Posterior cingulate gyrus (tissue), 11 donors: ENCODE measurements at regions of chr3 and their contacts with region 1.

Region 1: GRCh38 chr3:184185461-184186308 is at the start of gene ABCF3:
- DNase-seq: peak; percentile 96 to 100 (median 98)

Region 2: GRCh38 chr3:183680061-183680460 is 505.6 kb before region 1 on chr3:
- intact Hi-C with region 1: no loop called
- DNase-seq: no peak

Region 3: GRCh38 chr3:183812761-183813445 is 372.8 kb before region 1 on chr3:
- intact Hi-C with region 1: no loop called
- DNase-seq: peak in 6 of 10 donors; percentile 59 to 92 (median 70)

Region 4: DNA sequence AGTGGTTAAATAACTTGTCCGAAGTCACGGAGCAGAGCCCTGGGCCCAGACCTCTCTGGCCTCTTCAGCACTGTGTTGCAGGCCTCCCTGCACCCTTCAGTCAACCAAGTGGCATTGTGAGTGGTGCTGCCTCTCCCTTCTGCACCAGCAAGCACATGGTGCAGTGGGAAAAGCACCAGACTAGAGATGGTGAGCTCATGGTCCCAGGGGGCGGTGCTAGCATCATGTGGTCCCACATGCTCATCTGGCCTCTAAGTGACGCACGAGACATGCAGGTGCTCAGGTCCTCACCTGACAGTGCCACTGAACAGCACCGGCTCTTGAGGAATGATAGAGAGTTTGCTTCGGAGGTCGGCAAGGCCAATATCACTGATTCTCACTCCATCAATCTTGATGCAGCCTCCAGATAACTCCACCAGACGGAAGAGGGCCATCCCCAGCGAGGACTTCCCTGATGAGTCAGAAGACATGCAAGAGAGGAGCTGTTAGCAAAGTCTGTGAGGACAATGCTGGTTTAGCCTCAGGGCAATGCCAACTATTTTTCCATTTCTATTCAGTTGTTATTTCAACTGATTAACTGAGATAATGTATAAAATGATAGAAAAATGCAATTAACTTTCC is 248.0 kb before region 1 on chr3:
- intact Hi-C with region 1: no loop called
- DNase-seq: peak in 1 of 10 donors; percentile 34

Region 5: GRCh38 chr3:184135149-184135910 is 50.4 kb before region 1 on chr3 and contains the start of gene EIF2B5:
- intact Hi-C with region 1: loop called (anchors 1 kb)
- DNase-seq: peak; percentile 91 to 99 (median 94)

Region 6: DNA sequence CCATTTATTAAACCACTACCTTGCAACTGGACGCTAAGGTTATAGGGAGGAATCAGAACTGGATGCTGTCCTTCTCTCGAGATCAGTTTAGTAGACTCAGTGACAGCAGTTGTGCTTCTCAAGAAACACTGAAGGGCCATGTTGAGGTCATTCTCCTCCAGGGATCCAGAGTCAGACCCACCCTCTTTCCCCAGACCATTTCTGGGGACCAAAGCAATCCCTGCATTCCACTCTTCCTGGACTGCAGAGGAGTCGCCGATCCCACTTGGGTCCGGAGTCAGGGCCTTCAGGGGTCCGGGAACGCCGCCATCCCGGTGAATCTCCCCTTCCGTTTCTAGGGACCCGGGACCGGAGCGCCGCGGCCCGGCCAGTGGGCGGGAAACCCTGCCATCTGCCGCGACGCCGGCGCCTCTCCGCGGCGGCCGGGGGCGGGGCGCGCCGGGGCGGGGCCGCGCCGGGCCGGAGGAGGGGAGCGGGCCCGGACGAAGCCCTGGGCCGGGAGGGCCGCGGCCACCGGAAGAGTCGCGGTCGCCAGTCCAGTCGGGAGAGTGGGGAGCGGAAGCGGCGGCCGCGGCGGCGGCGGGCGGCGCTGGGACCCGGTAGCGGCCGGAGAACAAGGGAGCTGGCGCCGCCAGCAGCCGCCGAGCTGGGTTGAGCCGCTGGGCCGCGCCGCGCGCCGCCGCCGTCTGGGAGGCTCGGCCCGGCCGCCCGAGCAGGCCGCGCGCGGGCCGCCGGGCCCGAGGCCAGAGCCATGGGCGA is 30.6 kb before region 1 on chr3 and contains the start of gene DVL3:
- intact Hi-C with region 1: loop called (anchors 5 kb)
- DNase-seq: peak; percentile 42 to 95 (median 52)

Region 7: GRCh38 chr3:184174646-184175492 is 10.8 kb before region 1 on chr3 and contains the start of gene AP2M1:
- intact Hi-C with region 1: loop called (anchors 1 kb)
- DNase-seq: peak; percentile 97 to 100 (median 98)

Region 8: GRCh38 chr3:184250167-184250828 is 64.6 kb after region 1 on chr3:
- intact Hi-C with region 1: loop called (anchors 2 kb)
- DNase-seq: peak in 7 of 10 donors; percentile 76 to 95 (median 83)

Region 9: DNA sequence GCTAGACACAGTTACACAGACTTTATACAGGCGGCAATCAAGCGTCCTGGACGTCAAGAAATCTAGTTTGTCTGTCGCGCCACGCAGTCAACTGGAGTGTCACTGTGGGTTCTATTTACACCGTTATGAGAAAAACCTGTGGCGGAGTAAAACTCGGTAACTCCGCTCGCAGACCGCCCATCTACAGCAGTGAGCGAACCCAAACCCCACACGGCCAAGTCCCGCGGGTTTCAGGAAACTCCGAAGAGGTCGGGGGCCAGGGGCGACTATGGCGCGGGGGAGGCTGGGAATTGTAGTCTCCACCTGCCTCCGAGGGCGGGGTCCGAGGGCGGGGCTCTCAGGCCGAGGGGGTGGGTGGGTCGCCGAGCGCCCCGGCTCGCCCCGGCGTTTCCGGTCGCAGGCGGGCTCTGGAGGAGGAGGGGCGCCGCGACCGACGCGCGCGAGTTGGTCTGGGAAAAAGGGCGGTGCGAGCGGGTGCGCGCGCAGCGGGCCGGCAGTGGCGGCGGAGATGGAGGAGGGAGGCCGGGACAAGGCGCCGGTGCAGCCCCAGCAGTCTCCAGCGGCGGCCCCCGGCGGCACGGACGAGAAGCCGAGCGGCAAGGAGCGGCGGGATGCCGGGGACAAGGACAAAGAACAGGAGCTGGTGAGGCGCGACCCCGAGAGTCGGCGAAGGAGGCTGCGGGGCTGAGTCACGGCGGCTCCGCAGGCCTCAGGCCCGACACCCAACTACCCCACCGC is 113.2 kb after region 1 on chr3 and contains the start of gene PSMD2:
- intact Hi-C with region 1: loop called (anchors 5 kb)
- DNase-seq: peak; percentile 96 to 100 (median 98)